HepG2 (cell line): ENCODE measurements at regions of chr5 and their contacts with region 1.

Region 1: GRCh38 chr5:80255732-80256479 is at the start of gene SERINC5:
- DNase-seq: peak; percentile 53
- ATAC-seq: peak; percentile 77
- H3K4me3 ChIP-seq: peak within 1 kb of the TSS; percentile 80 to 97 (median 90)
- H3K27ac ChIP-seq: peak within 1 kb of the TSS; percentile 90
- H3K4me1 ChIP-seq: peaks cover 61% of the 10 kb centered on the region
- H3K27me3 ChIP-seq: no peaks in the 10 kb centered on the region; a peak in 1 of 5 replicates
- CTCF ChIP-seq: no peak
- EP300 ChIP-seq: 0 out of 4 replicates have a peak, but pooled peaks of 1 of the 2 experiments have one; percentile 8
- POLR2A ChIP-seq: peak; percentile 84 to 91
- RAD21 ChIP-seq: peak; percentile 12; the same call in 1 of the 2 replicates
- total RNA-seq, gene SERINC5: 22.8 and 23.1 TPM in 2 replicates

Region 2: GRCh38 chr5:80105698-80106439 is 150.0 kb before region 1 on chr5:
- CTCF ChIA-PET with region 1: no interaction called
- POLR2A ChIA-PET with region 1: interaction called, 11 read pairs
- in situ Hi-C with region 1: no loop called
- intact Hi-C with region 1: no loop called
- DNase-seq: peak; percentile 88
- ATAC-seq: peak; percentile 90
- H3K4me3 ChIP-seq: peak overlapping the region in 1 of 3 experiments; percentile 17; a peak in 1 of 6 replicates
- H3K27ac ChIP-seq: peak overlapping the region; percentile 30
- H3K4me1 ChIP-seq: peaks cover 45% of the 10 kb centered on the region
- H3K27me3 ChIP-seq: no peaks in the 10 kb centered on the region
- CTCF ChIP-seq: no peak
- EP300 ChIP-seq: peak in 1 of 2 experiments; percentile 75; a peak in 2 of 4 replicates
- POLR2A ChIP-seq: no peak
- RAD21 ChIP-seq: peak; percentile 8; the same call in 1 of the 2 replicates

Region 3: GRCh38 chr5:80181618-80182211 is 74.2 kb before region 1 on chr5:
- CTCF ChIA-PET with region 1: no interaction called
- POLR2A ChIA-PET with region 1: interaction called, 26 read pairs
- in situ Hi-C with region 1: no loop called
- intact Hi-C with region 1: loop called (anchors 2 kb)
- DNase-seq: peak; percentile 90
- ATAC-seq: peak; percentile 39
- H3K4me3 ChIP-seq: no peak overlapping the region
- H3K27ac ChIP-seq: peak overlapping the region; percentile 83
- H3K4me1 ChIP-seq: peaks cover 61% of the 10 kb centered on the region
- H3K27me3 ChIP-seq: no peaks in the 10 kb centered on the region
- CTCF ChIP-seq: no peak
- EP300 ChIP-seq: peak in 1 of 2 experiments; percentile 87; a peak in 2 of 4 replicates
- POLR2A ChIP-seq: no peak
- RAD21 ChIP-seq: no peak

Region 4: GRCh38 chr5:80231243-80231642 is 24.7 kb before region 1 on chr5:
- CTCF ChIA-PET with region 1: no interaction called
- POLR2A ChIA-PET with region 1: interaction called, 22 read pairs
- in situ Hi-C with region 1: no loop called
- intact Hi-C with region 1: no loop called
- DNase-seq: no peak
- ATAC-seq: no peak
- H3K4me3 ChIP-seq: no peak overlapping the region
- H3K27ac ChIP-seq: peak overlapping the region; percentile 88
- H3K4me1 ChIP-seq: peaks cover 53% of the 10 kb centered on the region
- H3K27me3 ChIP-seq: no peaks in the 10 kb centered on the region
- CTCF ChIP-seq: no peak
- EP300 ChIP-seq: no peak
- POLR2A ChIP-seq: no peak
- RAD21 ChIP-seq: no peak